PC-9 (cell line): ENCODE measurements at regions of chr1 and their contacts with region 1.

Region 1: GRCh38 chr1:224615861-224616755 is at the start of gene CNIH3:
- DNase-seq: peak; percentile 75 to 83
- H3K4me3 ChIP-seq: peak within 1 kb of the TSS; percentile 87
- H3K27ac ChIP-seq: peak within 1 kb of the TSS; percentile 23; the same call in 1 of the 2 replicates
- H3K4me1 ChIP-seq: peaks cover 34% of the 10 kb centered on the region
- H3K27me3 ChIP-seq: no peaks in the 10 kb centered on the region
- CTCF ChIP-seq: no peak
- total RNA-seq, gene CNIH3: 7.4 and 8.4 TPM in 2 replicates

Region 2: DNA sequence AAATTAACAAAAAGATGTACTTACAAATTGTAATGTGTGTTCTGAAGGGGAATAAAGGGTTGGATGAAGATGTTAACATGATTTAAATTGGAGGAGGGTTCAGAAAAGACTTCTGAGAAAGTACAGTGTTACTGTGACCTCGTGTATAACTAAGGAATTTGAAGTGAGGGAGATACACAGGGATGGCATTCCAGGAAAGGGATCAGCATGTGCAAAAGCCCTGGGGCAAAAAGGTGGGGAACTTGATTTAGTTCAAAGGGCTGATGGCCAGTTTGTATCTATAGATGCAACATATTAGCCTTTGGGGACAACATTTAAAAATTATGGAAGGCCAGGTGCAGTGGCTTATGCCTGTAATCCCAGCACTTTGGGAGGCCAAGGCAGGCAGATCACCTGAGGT is 466.4 kb before region 1 on chr1:
- CTCF ChIA-PET with region 1: no interaction called
- POLR2A ChIA-PET with region 1: no interaction called
- intact Hi-C with region 1: no loop called
- DNase-seq: no peak
- H3K4me3 ChIP-seq: no peak overlapping the region
- H3K27ac ChIP-seq: no peak overlapping the region
- H3K4me1 ChIP-seq: peaks cover 7% of the 10 kb centered on the region
- H3K27me3 ChIP-seq: no peaks in the 10 kb centered on the region
- CTCF ChIP-seq: no peak

Region 3: GRCh38 chr1:224253721-224254120 is 362.4 kb before region 1 on chr1:
- CTCF ChIA-PET with region 1: no interaction called
- POLR2A ChIA-PET with region 1: no interaction called
- intact Hi-C with region 1: no loop called
- DNase-seq: no peak
- H3K4me3 ChIP-seq: no peak overlapping the region
- H3K27ac ChIP-seq: no peak overlapping the region
- H3K4me1 ChIP-seq: no peaks in the 10 kb centered on the region
- H3K27me3 ChIP-seq: no peaks in the 10 kb centered on the region
- CTCF ChIP-seq: no peak

Region 4: GRCh38 chr1:224650290-224650689 is 34.2 kb after region 1 on chr1:
- CTCF ChIA-PET with region 1: interaction called, 3 read pairs
- POLR2A ChIA-PET with region 1: no interaction called
- intact Hi-C with region 1: loop called (anchors 5 kb)
- DNase-seq: no peak
- H3K4me3 ChIP-seq: no peak overlapping the region
- H3K27ac ChIP-seq: peak overlapping the region; percentile 60; the same call in 1 of the 2 replicates
- H3K4me1 ChIP-seq: peaks cover 25% of the 10 kb centered on the region
- H3K27me3 ChIP-seq: no peaks in the 10 kb centered on the region
- CTCF ChIP-seq: no peak

Region 5: GRCh38 chr1:224668984-224669383 is 52.9 kb after region 1 on chr1:
- CTCF ChIA-PET with region 1: no interaction called
- POLR2A ChIA-PET with region 1: no interaction called
- intact Hi-C with region 1: no loop called
- DNase-seq: peak; percentile 30 to 44
- H3K4me3 ChIP-seq: no peak overlapping the region
- H3K27ac ChIP-seq: no peak overlapping the region
- H3K4me1 ChIP-seq: no peaks in the 10 kb centered on the region
- H3K27me3 ChIP-seq: no peaks in the 10 kb centered on the region
- CTCF ChIP-seq: no peak